A549 (cell line): ENCODE measurements at regions of chr12 and their contacts with region 1.

Region 1: GRCh38 chr12:81627336-81628189 is 131.6 kb downstream of the PPFIA2 start:
- DNase-seq: peak; percentile 13 to 65
- ATAC-seq: peak in 1 of 2 experiments; percentile 73; a peak in 3 of 6 replicates
- H3K4me3 ChIP-seq: no peak overlapping the region
- H3K27ac ChIP-seq: no peak overlapping the region
- H3K4me1 ChIP-seq: no peaks in the 10 kb centered on the region
- CTCF ChIP-seq: peak; percentile 70
- EP300 ChIP-seq: no peak
- POLR2A ChIP-seq: no peak
- RAD21 ChIP-seq: peak; percentile 66 to 70

Region 2: GRCh38 chr12:81610955-81611889 is 16.3 kb before region 1 on chr12:
- CTCF ChIA-PET with region 1: interaction called, 11 read pairs
- POLR2A ChIA-PET with region 1: no interaction called
- DNase-seq: peak; percentile 3 to 51
- ATAC-seq: peak; percentile 89 to 98
- H3K4me3 ChIP-seq: no peak overlapping the region
- H3K27ac ChIP-seq: no peak overlapping the region
- H3K4me1 ChIP-seq: no peaks in the 10 kb centered on the region
- CTCF ChIP-seq: peak; percentile 5; the same call in 1 of the 3 replicates
- EP300 ChIP-seq: no peak
- POLR2A ChIP-seq: no peak
- RAD21 ChIP-seq: peak; percentile 20 to 40; a peak in 2 of 5 replicates

Region 3: GRCh38 chr12:81722004-81722403 is 94.4 kb after region 1 on chr12:
- CTCF ChIA-PET with region 1: no interaction called
- POLR2A ChIA-PET with region 1: no interaction called
- DNase-seq: no peak
- ATAC-seq: no peak
- H3K4me3 ChIP-seq: no peak overlapping the region
- H3K27ac ChIP-seq: no peak overlapping the region
- H3K4me1 ChIP-seq: no peaks in the 10 kb centered on the region
- CTCF ChIP-seq: no peak
- EP300 ChIP-seq: no peak
- POLR2A ChIP-seq: no peak
- RAD21 ChIP-seq: no peak